ENCODE measurements at regions of chr4 and their contacts with region 1.

Region 1: GRCh38 chr4:48085821-48086607 is 48.0 kb downstream of the TXK start:
- DNase-seq: no peak
- ATAC-seq: peak; percentile 85
- H3K4me3 ChIP-seq: no peak overlapping the region
- H3K4me1 ChIP-seq: no peaks in the 10 kb centered on the region
- CTCF ChIP-seq: no peak

Region 2: GRCh38 chr4:47926639-47927258 is 159.3 kb before region 1 on chr4:
- intact Hi-C with region 1: loop called in 1 of 2 experiments (anchors 5 kb)
- DNase-seq: peak in 2 of 3 donors; percentile 50 to 64
- ATAC-seq: peak; percentile 96
- H3K4me3 ChIP-seq: no peak overlapping the region
- H3K4me1 ChIP-seq: no peaks in the 10 kb centered on the region
- CTCF ChIP-seq: peak; percentile 45

Measured in mucosa of descending colon (tissue), 3 donors.